ENCODE measurements at regions of chr18 and their contacts with region 1.

Region 1: DNA sequence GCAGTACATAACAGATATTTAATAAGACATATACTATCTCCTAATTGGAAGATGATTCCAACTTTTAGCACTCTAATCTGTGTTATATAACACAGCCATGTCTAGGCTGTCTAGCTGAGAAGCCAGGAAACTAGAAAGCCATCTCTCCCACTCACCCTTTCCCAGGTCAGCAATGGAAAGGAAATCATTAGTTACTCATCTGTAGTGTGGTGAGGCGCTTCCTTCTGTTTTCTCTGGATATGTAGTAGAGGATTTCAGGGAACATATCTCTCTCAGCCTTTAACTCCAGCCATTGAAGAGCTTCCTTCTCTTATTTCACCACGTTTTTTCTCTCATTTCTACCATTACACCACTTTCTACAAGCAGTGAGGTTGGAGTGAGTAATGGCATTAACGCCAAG is 19.4 kb downstream of the RBBP8 start:
- DNase-seq: no peak
- H3K4me3 ChIP-seq: no peak overlapping the region
- H3K27ac ChIP-seq: no peak overlapping the region
- H3K4me1 ChIP-seq: no peaks in the 10 kb centered on the region
- H3K27me3 ChIP-seq: no peaks in the 10 kb centered on the region
- CTCF ChIP-seq: no peak
- POLR2A ChIP-seq: no peak

Region 2: GRCh38 chr18:22977847-22978701 is 25.5 kb after region 1 on chr18:
- intact Hi-C with region 1: loop called (anchors 2 kb)
- DNase-seq: no peak
- H3K4me3 ChIP-seq: no peak overlapping the region
- H3K27ac ChIP-seq: peak overlapping the region; percentile 21
- H3K4me1 ChIP-seq: peaks cover 5% of the 10 kb centered on the region
- H3K27me3 ChIP-seq: no peaks in the 10 kb centered on the region
- CTCF ChIP-seq: no peak
- POLR2A ChIP-seq: no peak

Region 3: DNA sequence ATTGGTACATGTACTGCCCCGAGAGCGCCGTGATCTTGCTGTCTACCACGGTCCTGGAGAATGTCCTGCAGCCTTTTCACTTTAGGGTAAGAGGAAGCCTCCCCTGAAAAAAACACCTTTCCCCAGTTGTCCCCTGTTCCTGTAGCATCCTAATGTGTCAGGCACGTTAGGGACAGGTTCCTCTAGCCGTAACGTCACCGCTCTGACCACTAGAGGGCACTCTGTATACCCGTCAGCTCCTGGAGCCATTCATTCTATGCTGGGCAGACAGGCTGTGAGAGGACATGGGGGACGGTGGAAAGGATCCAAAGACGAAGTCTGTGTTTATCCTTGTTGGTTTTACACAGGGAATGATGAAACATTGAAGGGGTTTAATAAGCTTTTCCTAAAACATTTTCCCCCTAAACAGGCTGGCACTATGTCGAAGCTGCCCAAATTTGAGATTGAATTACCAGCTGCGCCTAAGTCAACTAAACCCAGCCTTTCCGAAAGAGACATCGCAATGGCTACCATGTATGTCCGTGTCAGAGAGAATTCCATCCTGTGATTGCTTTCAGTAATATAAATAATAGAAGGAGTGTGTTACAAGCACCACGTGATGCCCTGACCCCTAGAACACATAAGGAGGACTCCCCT is 563.5 kb after region 1 on chr18:
- intact Hi-C with region 1: no loop called
- DNase-seq: no peak
- H3K4me3 ChIP-seq: no peak overlapping the region
- H3K27ac ChIP-seq: peak overlapping the region; percentile 54
- H3K4me1 ChIP-seq: peaks cover 5% of the 10 kb centered on the region
- H3K27me3 ChIP-seq: no peaks in the 10 kb centered on the region
- CTCF ChIP-seq: peak; percentile 43 to 77 (median 74)
- POLR2A ChIP-seq: no peak

Measured in vagina (tissue), 2 donors.